ENCODE measurements at regions of chr13 and their contacts with region 1.

Region 1: DNA sequence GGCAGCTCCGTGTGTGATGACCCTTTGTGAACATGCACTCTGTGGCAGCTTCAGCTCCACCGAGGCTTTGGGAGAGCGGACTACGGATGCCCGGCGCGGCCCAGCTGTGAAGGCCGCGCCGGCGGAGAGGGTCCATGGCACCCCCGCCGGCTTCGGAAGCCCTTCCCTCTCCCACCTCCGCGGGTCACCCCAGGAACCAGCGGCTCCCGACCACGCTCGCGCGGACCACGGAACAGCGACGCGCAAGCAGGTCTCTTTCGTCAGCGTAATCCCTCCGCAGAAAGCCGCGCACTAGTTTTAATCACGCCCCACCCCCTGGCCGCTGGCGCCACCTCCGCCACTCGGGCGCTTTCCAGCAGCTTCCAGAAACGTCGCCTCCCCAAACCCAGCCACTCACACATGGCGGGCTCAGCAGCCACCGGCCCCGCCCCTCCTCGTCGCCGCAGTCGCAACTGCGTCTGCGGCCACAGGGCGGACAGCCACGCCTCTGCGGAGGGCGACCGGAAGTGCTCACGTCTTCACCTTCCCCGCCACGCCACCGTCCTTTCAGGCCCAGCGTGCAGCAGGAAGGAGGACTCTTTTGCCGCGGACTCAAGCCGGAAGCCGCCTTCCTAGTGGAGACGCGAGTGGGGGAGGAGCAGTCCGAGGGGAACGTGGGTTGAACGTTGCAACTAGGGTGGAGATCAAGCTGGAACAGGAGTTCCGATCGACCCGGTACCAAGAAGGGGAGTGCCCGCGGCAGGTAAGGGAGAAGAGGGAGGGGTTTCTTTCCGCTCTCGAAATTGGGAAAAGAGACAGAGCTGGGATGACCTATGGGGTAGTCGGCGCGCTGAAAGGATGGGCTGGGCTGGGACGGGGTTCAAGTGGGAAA is at the start of gene USPL1:
- DNase-seq: peak; percentile 97 to 100 (median 99)
- ATAC-seq: peak; percentile 89
- H3K4me3 ChIP-seq: peak within 1 kb of the TSS; percentile 78 to 96
- H3K4me3 Mint-ChIP-seq: no peak within 1 kb of the TSS
- H3K27ac ChIP-seq: peak within 1 kb of the TSS; percentile 94 to 95
- H3K27ac Mint-ChIP-seq: no peak within 1 kb of the TSS
- H3K4me1 ChIP-seq: peaks cover 34% of the 10 kb centered on the region
- H3K4me1 Mint-ChIP-seq: peaks cover 39% of the 10 kb centered on the region
- H3K27me3 ChIP-seq: no peaks in the 10 kb centered on the region
- H3K27me3 Mint-ChIP-seq: no peaks in the 10 kb centered on the region
- CTCF ChIP-seq: no peak
- total RNA-seq, gene USPL1: 42.0 to 42.4 TPM

Region 2: DNA sequence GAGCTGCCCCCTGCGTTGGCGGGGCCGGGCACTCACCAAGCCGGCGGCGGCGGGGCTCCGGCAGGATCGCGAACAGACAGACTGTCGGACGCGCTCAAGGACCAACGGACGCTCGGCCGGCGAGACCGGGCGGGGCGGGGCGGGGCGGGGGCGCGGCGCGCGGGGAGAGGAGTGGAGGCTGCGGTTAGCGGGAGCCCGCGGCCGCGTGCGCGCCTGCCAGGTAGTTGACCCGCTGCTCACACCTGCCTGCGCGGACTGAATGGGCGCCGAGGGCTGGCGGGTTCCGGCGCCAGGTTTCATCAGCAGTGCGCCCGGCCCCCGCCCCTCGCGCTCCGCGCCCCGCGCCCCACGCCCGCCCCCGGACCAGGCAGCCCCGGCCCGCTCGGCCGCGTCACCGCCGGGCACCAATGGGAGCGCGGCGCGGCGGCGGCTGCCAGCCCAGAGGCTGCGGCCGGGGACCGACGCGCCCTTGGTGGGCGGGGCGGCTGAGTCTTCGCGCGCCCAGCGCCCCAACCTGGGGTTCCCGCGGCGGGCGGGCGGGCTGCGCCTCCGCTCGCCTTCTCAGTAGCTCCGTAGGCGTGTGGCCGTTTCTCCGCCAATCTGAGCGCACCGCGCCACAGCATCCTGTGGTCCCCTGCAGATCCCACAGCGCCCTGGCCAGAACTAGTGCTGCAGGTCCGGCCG is 1022.0 kb before region 1 on chr13 and contains the start of gene SLC7A1:
- CTCF ChIA-PET with region 1: no interaction called
- POLR2A ChIA-PET with region 1: no interaction called
- intact Hi-C with region 1: loop called in 1 of 2 experiments (anchors 10 kb)
- DNase-seq: peak; percentile 67 to 93 (median 79)
- ATAC-seq: peak; percentile 88
- H3K4me3 ChIP-seq: peak within 1 kb of the TSS; percentile 61 to 74
- H3K4me3 Mint-ChIP-seq: peak within 1 kb of the TSS; percentile 90
- H3K27ac ChIP-seq: peak within 1 kb of the TSS; percentile 63 to 73
- H3K27ac Mint-ChIP-seq: peak within 1 kb of the TSS; percentile 85
- H3K4me1 ChIP-seq: peaks cover 15% of the 10 kb centered on the region
- H3K4me1 Mint-ChIP-seq: peaks cover 36% of the 10 kb centered on the region
- H3K27me3 ChIP-seq: no peaks in the 10 kb centered on the region
- H3K27me3 Mint-ChIP-seq: no peaks in the 10 kb centered on the region
- CTCF ChIP-seq: no peak
- total RNA-seq, gene SLC7A1: 15.2 to 18.4 TPM

Region 3: DNA sequence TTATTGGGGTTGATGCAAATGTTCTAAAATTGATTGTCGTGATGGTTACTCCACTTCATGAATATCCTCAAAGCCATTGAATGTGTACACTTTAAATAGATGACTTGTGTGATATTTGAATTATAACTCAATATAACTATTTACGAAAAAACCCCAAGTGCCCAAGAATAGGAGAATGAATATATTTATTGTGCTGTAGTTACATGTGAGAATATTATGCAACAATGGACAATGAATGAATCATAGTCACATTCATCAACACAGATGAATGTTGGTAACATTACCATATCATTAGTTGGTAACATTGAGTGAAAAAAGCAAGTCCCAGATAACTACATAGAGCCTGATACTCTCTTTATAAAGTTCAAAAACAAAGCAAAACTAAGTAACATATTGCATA is 639.3 kb before region 1 on chr13:
- CTCF ChIA-PET with region 1: no interaction called
- POLR2A ChIA-PET with region 1: no interaction called
- intact Hi-C with region 1: no loop called
- DNase-seq: no peak
- ATAC-seq: no peak
- H3K4me3 ChIP-seq: no peak overlapping the region
- H3K4me3 Mint-ChIP-seq: no peak overlapping the region
- H3K27ac ChIP-seq: no peak overlapping the region
- H3K27ac Mint-ChIP-seq: no peak overlapping the region
- H3K4me1 ChIP-seq: no peaks in the 10 kb centered on the region
- H3K4me1 Mint-ChIP-seq: peaks cover 2% of the 10 kb centered on the region
- H3K27me3 ChIP-seq: no peaks in the 10 kb centered on the region
- H3K27me3 Mint-ChIP-seq: no peaks in the 10 kb centered on the region
- CTCF ChIP-seq: no peak

Region 4: DNA sequence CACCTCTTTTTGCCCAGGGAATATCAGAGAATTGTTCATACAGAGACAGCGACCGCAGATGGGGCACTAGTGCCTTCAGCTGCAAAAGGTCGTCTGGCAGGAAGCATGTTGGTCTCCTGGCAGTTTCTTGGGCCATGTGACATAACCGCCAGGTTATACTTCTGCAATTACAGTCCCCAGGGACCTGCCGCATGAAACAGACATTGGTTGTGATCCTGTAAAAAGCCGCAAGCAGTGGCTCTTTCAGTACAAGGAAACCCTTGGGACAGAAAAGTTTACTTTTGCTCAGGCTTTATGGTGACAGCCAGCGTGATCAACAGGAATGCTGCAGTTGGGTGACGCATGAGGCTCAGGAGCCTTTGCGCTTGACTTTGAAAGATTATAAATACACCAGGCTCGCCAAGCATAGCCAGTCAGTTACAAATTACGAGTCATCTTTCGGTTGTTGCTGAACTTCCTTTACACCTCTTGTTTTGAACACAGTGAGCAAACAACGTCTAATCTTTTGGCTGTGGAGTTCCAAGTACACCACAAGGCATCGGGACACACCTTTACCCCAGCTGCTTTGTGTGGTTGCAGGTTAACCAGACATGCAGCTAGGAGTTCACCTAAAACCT is 245.8 kb before region 1 on chr13:
- CTCF ChIA-PET with region 1: interaction called, 4 read pairs
- POLR2A ChIA-PET with region 1: interaction called, 22 read pairs
- intact Hi-C with region 1: loop called (anchors 1 to 10 kb)
- DNase-seq: peak; percentile 39 to 90 (median 75)
- ATAC-seq: peak; percentile 55
- H3K4me3 ChIP-seq: peak overlapping the region; percentile 2 to 9
- H3K4me3 Mint-ChIP-seq: peak overlapping the region; percentile 67
- H3K27ac ChIP-seq: peak overlapping the region; percentile 53 to 66
- H3K27ac Mint-ChIP-seq: peak overlapping the region; percentile 94
- H3K4me1 ChIP-seq: peaks cover 77% of the 10 kb centered on the region
- H3K4me1 Mint-ChIP-seq: peaks cover 82% of the 10 kb centered on the region
- H3K27me3 ChIP-seq: no peaks in the 10 kb centered on the region
- H3K27me3 Mint-ChIP-seq: no peaks in the 10 kb centered on the region
- CTCF ChIP-seq: no peak

Region 5: DNA sequence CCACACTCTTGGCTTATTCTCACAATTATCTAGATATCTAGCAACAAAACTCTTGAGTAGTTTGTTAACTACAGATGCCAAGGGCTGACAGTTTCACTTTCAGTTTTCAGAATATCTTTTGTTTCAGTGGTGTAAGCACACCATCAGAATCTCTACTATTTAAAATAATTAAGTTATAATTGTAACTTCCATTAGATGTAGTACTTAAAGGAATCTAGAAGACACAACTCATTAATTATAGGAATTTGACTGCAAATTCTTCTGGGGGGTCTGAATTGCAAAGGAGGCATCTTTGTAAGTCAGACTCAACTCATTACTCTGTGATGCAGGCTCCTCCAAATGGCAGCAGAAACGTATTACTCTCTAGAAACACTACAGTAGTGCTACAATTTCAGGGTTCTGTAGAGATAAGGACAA is 44.7 kb before region 1 on chr13:
- CTCF ChIA-PET with region 1: interaction called, 3 read pairs
- POLR2A ChIA-PET with region 1: interaction called, 13 read pairs
- intact Hi-C with region 1: loop called (anchors 1 to 5 kb)
- DNase-seq: peak in 4 of 9 experiments; percentile 12 to 72 (median 40)
- ATAC-seq: peak; percentile 57
- H3K4me3 ChIP-seq: peak overlapping the region; percentile 23 to 51
- H3K4me3 Mint-ChIP-seq: peak overlapping the region; percentile 75
- H3K27ac ChIP-seq: peak overlapping the region; percentile 58 to 72
- H3K27ac Mint-ChIP-seq: peak overlapping the region; percentile 91
- H3K4me1 ChIP-seq: peaks cover 27% of the 10 kb centered on the region
- H3K4me1 Mint-ChIP-seq: peaks cover 32% of the 10 kb centered on the region
- H3K27me3 ChIP-seq: no peaks in the 10 kb centered on the region
- H3K27me3 Mint-ChIP-seq: no peaks in the 10 kb centered on the region
- CTCF ChIP-seq: peak; percentile 44

Region 6: DNA sequence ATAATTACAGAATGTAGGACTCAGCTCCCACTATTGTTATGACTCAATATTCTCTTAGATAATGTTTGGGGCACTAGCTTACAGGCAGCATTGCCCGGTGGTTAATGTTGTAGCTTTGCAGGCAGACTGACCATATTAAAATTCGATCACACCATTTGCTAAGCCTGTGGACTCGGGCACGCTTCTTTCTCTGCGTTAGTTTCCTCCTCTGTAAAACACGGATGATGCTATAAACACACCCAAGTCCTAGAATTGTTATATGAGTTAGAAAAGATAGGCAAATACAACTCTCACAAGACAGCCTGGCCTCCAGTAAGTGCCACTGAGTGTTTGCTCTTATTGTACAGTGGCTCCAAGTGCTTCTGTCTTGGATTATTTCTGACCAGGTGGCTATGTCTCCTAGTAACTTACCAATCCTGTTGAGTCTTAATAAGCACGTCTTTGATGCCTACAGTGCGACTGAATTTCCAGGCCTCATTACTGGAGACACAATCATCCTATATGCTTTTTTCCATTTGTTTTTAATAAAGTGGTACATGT is 67.8 kb after region 1 on chr13:
- CTCF ChIA-PET with region 1: no interaction called
- POLR2A ChIA-PET with region 1: no interaction called
- intact Hi-C with region 1: no loop called
- DNase-seq: no peak
- ATAC-seq: no peak
- H3K4me3 ChIP-seq: no peak overlapping the region
- H3K4me3 Mint-ChIP-seq: no peak overlapping the region
- H3K27ac ChIP-seq: no peak overlapping the region
- H3K27ac Mint-ChIP-seq: no peak overlapping the region
- H3K4me1 ChIP-seq: peaks cover 5% of the 10 kb centered on the region
- H3K4me1 Mint-ChIP-seq: peaks cover 3% of the 10 kb centered on the region
- H3K27me3 ChIP-seq: no peaks in the 10 kb centered on the region
- H3K27me3 Mint-ChIP-seq: no peaks in the 10 kb centered on the region
- CTCF ChIP-seq: no peak

Region 7: DNA sequence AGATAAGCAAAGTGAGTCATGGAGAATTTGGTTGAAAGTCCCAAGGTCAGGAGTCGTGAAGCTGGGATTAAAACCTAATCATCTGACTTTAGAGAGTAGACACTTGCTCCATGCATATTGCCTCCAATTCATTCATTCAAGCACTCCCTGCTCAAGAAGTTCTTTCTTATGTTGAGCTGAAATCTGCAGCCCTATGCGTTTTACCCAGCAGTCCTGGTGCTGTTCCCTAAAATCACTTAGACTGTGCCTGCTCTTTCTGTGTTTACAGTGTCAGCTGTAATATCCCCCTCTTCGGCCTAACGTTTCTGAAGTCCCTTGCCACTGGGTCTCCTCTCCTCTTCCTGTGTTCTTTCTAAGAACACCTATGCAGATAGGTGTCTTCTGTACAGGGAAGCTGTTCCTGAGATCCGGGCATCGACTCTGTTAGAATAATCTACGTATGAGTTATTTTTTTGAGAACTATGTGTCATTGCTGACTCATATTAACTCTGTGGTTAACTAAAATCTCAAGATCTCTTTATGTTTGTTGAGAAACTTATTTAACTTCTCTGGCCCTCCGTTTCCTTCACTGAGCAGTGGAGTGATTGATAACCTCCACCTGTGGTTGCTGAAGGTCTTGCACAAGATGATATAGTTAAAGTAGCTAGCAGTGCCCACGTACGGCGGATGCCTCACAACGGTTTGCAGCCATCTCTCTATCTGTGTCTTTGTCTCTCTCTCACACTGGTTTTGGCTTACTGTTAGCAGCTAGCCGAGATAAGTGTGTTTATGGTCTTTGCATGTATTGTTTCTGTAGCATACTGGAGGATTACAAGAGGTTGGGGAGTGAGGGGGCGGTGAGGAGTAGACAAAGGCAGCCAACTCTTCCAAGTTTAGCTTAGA is 122.5 kb after region 1 on chr13:
- CTCF ChIA-PET with region 1: interaction called, 3 read pairs
- POLR2A ChIA-PET with region 1: interaction called, 5 read pairs
- intact Hi-C with region 1: loop called (anchors 1 to 5 kb)
- DNase-seq: peak in 8 of 9 experiments; percentile 34 to 87 (median 62)
- ATAC-seq: peak; percentile 54
- H3K4me3 ChIP-seq: peak overlapping the region; percentile 25 to 33
- H3K4me3 Mint-ChIP-seq: peak overlapping the region; percentile 73
- H3K27ac ChIP-seq: peak overlapping the region; percentile 28 to 68
- H3K27ac Mint-ChIP-seq: peak overlapping the region; percentile 82
- H3K4me1 ChIP-seq: peaks cover 73% of the 10 kb centered on the region
- H3K4me1 Mint-ChIP-seq: peaks cover 83% of the 10 kb centered on the region
- H3K27me3 ChIP-seq: no peaks in the 10 kb centered on the region
- H3K27me3 Mint-ChIP-seq: no peaks in the 10 kb centered on the region
- CTCF ChIP-seq: no peak

Region 8: DNA sequence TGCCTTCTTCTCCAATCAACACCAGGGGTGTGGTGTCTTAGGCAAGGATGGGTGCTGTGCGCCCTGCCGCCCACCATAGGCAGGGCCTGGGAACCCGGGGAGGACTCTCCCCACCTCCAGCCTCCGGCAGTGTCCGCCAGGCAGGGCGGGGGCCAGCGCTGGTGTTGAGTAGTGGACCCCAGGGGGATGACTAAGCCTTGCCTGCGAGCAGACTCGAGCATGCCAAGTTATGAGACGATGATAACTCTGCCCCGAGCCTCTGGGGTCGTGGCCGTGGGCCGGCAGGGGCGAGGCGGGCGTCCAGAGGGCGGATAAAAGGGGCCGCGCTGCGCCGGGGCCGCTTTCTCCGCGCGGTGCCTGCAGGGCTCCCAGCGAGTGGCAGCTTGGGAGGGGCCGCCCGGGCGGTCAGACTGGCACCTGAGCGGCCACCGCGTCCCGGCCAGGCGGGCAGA is 288.4 kb after region 1 on chr13 and contains the start of gene MEDAG:
- CTCF ChIA-PET with region 1: no interaction called
- POLR2A ChIA-PET with region 1: no interaction called
- intact Hi-C with region 1: no loop called
- DNase-seq: no peak
- ATAC-seq: no peak
- H3K4me3 ChIP-seq: no peak within 1 kb of the TSS
- H3K4me3 Mint-ChIP-seq: no peak within 1 kb of the TSS
- H3K27ac ChIP-seq: no peak within 1 kb of the TSS
- H3K27ac Mint-ChIP-seq: no peak within 1 kb of the TSS
- H3K4me1 ChIP-seq: no peaks in the 10 kb centered on the region
- H3K4me1 Mint-ChIP-seq: peaks cover 9% of the 10 kb centered on the region
- H3K27me3 ChIP-seq: peaks cover 13 to 19% of the 10 kb centered on the region in 2 experiments
- H3K27me3 Mint-ChIP-seq: peaks cover 59% of the 10 kb centered on the region
- CTCF ChIP-seq: no peak
- total RNA-seq, gene MEDAG: not detected

Region 9: GRCh38 chr13:31199849-31200636 is 582.5 kb after region 1 on chr13 and contains the start of gene B3GLCT:
- CTCF ChIA-PET with region 1: no interaction called
- POLR2A ChIA-PET with region 1: no interaction called
- intact Hi-C with region 1: loop called in 1 of 2 experiments (anchors 2 kb)
- DNase-seq: peak; percentile 71 to 91 (median 80)
- ATAC-seq: peak; percentile 78
- H3K4me3 ChIP-seq: peak within 1 kb of the TSS; percentile 65 to 81
- H3K4me3 Mint-ChIP-seq: peak within 1 kb of the TSS; percentile 84
- H3K27ac ChIP-seq: peak within 1 kb of the TSS; percentile 88
- H3K27ac Mint-ChIP-seq: peak within 1 kb of the TSS; percentile 92
- H3K4me1 ChIP-seq: peaks cover 18% of the 10 kb centered on the region
- H3K4me1 Mint-ChIP-seq: peaks cover 29% of the 10 kb centered on the region
- H3K27me3 ChIP-seq: no peaks in the 10 kb centered on the region
- H3K27me3 Mint-ChIP-seq: no peaks in the 10 kb centered on the region
- CTCF ChIP-seq: peak; percentile 94
- total RNA-seq, gene B3GLCT: 5.0 TPM

Measured in CD8-positive, alpha-beta T cell (primary cell).